ENCODE measurements at regions of chr3 and their contacts with region 1.

Region 1: GRCh38 chr3:12868039-12869034 is 27.0 kb upstream of the RPL32 start:
- DNase-seq: peak; percentile 65 to 82
- H3K4me3 ChIP-seq: no peak overlapping the region
- H3K27ac ChIP-seq: no peak overlapping the region
- H3K4me1 ChIP-seq: no peaks in the 10 kb centered on the region
- H3K27me3 ChIP-seq: peaks cover 56% of the 10 kb centered on the region
- CTCF ChIP-seq: peak; percentile 89

Region 2: GRCh38 chr3:11910971-11911531 is 957.3 kb before region 1 on chr3:
- CTCF ChIA-PET with region 1: no interaction called
- POLR2A ChIA-PET with region 1: no interaction called
- intact Hi-C with region 1: loop called (anchors 5 kb)
- DNase-seq: no peak
- H3K4me3 ChIP-seq: no peak overlapping the region
- H3K27ac ChIP-seq: no peak overlapping the region
- H3K4me1 ChIP-seq: no peaks in the 10 kb centered on the region
- H3K27me3 ChIP-seq: peaks cover 100% of the 10 kb centered on the region
- CTCF ChIP-seq: no peak

Region 3: DNA sequence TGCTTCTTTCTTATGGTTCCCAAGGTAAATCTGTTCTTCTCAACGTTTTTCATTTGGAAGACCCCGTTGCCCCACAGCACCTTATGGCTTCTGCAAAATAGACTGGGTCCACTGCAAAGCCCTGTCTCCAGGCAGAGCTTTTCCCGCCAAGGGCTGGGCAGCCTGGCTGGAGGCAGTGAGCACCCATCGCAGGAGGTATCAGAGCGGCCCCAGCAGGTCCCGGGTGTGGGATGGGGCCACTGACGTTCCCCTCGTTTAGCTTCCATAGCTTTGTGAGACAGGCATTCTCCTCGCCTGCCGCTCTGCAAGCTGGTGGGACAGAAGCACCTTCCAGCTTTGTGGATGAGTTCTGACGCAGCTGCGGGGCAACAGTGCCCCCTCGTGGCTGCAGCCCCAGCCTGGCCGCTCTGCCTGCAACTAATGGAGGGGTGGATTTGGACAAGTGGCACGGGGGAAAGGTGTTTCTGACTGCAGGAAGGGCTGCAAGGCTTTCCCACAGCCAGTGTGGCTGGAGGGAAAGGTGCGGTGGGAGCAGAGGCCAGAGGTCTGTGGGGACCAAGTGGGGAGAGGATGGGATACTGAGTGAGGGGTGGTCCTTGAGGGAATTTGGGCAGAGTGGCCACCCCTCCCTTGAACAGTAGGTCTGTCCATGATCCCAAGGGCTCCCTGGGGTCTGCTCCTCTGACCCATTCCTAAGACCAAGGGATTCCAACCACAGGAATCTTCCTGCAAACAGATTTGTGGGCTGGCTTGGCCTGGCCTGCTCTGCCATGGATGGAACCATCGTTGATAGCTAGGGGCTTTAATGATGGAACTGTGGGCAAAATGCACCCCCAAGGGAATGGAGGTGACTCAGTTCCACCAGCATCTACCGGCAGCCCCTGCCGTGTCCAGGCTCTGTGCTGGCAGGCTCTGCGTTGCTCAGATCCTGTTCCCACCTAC is 780.0 kb after region 1 on chr3:
- CTCF ChIA-PET with region 1: no interaction called
- POLR2A ChIA-PET with region 1: no interaction called
- intact Hi-C with region 1: loop called (anchors 2 kb)
- DNase-seq: peak; percentile 54 to 85
- H3K4me3 ChIP-seq: no peak overlapping the region
- H3K27ac ChIP-seq: no peak overlapping the region
- H3K4me1 ChIP-seq: peaks cover 47% of the 10 kb centered on the region
- H3K27me3 ChIP-seq: no peaks in the 10 kb centered on the region
- CTCF ChIP-seq: peak; percentile 99